CD4-positive, alpha-beta T cell (primary cell): ENCODE measurements at regions of chr1 and their contacts with region 1.

Region 1: DNA sequence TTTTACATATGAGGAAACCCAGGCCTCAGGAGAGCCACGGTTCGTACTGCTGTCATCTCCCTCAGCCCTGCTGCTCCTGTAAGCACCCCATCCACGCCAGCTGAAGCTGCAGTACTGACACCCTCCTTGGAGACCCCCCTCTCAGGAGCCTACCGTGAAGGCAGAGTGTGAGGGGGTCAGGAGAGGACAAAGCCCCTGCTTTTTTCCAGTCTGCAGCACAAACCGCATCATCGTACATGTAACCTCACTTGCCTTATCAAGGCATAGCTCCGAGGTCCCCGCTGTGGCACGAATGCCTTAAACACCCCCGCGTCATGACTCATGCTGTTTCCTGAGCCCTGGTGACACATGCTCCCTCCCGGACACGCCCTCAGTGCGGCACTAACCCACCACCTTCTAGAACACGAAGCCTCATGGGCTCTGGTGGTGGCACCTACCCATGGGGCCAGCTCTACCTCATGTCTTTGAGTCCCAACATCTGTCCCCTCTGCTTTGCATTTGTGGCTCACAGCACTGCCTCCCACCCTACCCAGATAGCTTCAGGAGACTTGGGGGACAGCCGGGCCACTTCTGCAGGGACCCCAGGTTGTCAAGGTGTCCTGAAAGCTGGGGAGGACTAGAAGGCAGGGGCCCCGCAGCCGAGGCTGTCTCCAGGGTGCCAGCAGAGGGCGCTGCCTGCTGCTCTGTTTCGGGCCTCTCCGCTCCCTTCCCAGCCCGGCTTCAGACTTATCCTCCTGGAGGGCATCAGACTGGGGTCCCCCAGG is 4.9 kb downstream of the SH3BGRL3 start:
- DNase-seq: peak; percentile 76 to 98 (median 94)
- ATAC-seq: peak; percentile 70
- H3K4me3 ChIP-seq: peak overlapping the region; percentile 44
- H3K4me3 Mint-ChIP-seq: peak overlapping the region; percentile 89
- H3K27ac ChIP-seq: peak overlapping the region; percentile 89 to 94
- H3K27ac Mint-ChIP-seq: peak overlapping the region; percentile 95
- H3K4me1 ChIP-seq: peaks cover 96% of the 10 kb centered on the region
- H3K4me1 Mint-ChIP-seq: peaks cover 92% of the 10 kb centered on the region
- H3K27me3 ChIP-seq: no peaks in the 10 kb centered on the region
- H3K27me3 Mint-ChIP-seq: no peaks in the 10 kb centered on the region
- CTCF ChIP-seq: peak; percentile 83

Region 2: GRCh38 chr1:26306290-26307229 is 21.8 kb after region 1 on chr1 and contains the start of gene UBXN11:
- CTCF ChIA-PET with region 1: interaction called, 33 read pairs
- POLR2A ChIA-PET with region 1: interaction called, 270 read pairs
- intact Hi-C with region 1: loop called in 1 of 2 experiments (anchors 1 kb)
- DNase-seq: peak; percentile 81 to 97 (median 88)
- ATAC-seq: peak; percentile 94
- H3K4me3 ChIP-seq: peak within 1 kb of the TSS; percentile 77
- H3K4me3 Mint-ChIP-seq: peak within 1 kb of the TSS; percentile 94
- H3K27ac ChIP-seq: peak within 1 kb of the TSS; percentile 65 to 67
- H3K27ac Mint-ChIP-seq: peak within 1 kb of the TSS; percentile 87
- H3K4me1 ChIP-seq: peaks cover 41% of the 10 kb centered on the region
- H3K4me1 Mint-ChIP-seq: peaks cover 34% of the 10 kb centered on the region
- H3K27me3 ChIP-seq: no peaks in the 10 kb centered on the region
- H3K27me3 Mint-ChIP-seq: no peaks in the 10 kb centered on the region
- CTCF ChIP-seq: no peak
- total RNA-seq, gene UBXN11: 39.3 to 42.3 TPM

Region 3: GRCh38 chr1:26363549-26364448 is 79.0 kb after region 1 on chr1:
- CTCF ChIA-PET with region 1: interaction called, 7 read pairs
- POLR2A ChIA-PET with region 1: interaction called, 12 read pairs
- intact Hi-C with region 1: loop called in 1 of 2 experiments (anchors 5 kb)
- DNase-seq: peak; percentile 74 to 96 (median 84)
- ATAC-seq: peak; percentile 61
- H3K4me3 ChIP-seq: no peak overlapping the region
- H3K4me3 Mint-ChIP-seq: peak overlapping the region; percentile 69
- H3K27ac ChIP-seq: no peak overlapping the region
- H3K27ac Mint-ChIP-seq: no peak overlapping the region
- H3K4me1 ChIP-seq: peaks cover 79% of the 10 kb centered on the region
- H3K4me1 Mint-ChIP-seq: peaks cover 56% of the 10 kb centered on the region
- H3K27me3 ChIP-seq: peaks cover 0 to 21% of the 10 kb centered on the region in 2 experiments
- H3K27me3 Mint-ChIP-seq: peaks cover 28% of the 10 kb centered on the region
- CTCF ChIP-seq: peak; percentile 98

Region 4: DNA sequence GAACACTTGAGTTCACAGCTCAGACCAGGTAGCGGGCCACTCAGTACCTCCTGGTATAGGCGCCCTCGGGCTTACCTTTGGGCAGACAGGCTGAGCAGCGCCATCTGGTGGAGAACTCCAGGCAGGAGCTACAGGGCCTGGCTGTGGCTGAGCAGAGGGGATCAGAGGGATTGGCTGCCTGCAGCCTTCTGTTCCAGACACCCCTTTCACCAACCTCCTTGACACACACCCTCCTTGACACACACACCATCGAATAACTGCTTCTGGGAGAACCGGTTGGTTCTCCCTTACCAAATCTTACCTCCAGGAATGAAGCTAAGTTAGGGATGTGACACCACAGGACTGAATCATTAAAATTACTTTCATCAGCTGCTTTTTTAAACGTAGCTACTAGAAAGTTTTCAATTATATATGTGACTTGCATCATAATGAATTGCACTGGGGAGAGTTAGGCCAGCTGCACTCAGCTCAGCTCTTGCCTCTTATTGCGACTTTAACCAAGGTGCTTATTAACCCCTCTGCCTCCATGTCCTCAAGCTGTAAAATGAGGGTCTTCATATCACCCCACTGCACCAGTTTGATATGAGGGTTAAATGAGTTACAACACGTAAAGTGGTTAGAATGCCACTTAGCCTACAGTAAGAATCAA is 132.5 kb after region 1 on chr1:
- CTCF ChIA-PET with region 1: interaction called, 9 read pairs
- POLR2A ChIA-PET with region 1: interaction called, 6 read pairs
- intact Hi-C with region 1: loop called in 1 of 2 experiments (anchors 2 kb)
- DNase-seq: peak; percentile 78 to 91 (median 82)
- ATAC-seq: peak; percentile 100
- H3K4me3 ChIP-seq: no peak overlapping the region
- H3K4me3 Mint-ChIP-seq: no peak overlapping the region
- H3K27ac ChIP-seq: no peak overlapping the region
- H3K27ac Mint-ChIP-seq: no peak overlapping the region
- H3K4me1 ChIP-seq: no peaks in the 10 kb centered on the region
- H3K4me1 Mint-ChIP-seq: no peaks in the 10 kb centered on the region
- H3K27me3 ChIP-seq: peaks cover 19 to 27% of the 10 kb centered on the region in 2 experiments
- H3K27me3 Mint-ChIP-seq: peaks cover 40% of the 10 kb centered on the region
- CTCF ChIP-seq: peak; percentile 95